GM10248 (cell line): ENCODE measurements at regions of chr5 and their contacts with region 1.

Region 1: DNA sequence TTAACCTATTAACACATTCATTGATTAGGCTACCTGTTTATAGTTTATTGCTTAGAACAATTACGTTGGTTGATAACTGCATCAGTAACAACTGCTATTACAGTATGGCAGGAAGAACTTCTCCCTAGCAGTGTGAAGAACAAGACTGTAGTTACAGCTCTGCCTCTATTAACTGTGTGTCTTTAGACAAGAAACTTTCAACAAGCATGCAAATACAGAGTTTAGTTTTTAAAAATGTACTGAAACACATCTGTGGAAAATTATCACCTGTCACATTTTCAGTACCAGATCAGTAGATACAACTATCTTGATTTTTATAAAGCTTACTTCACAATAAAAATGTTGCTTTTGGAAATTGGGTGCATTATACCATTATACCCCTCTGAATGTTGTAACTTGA is 22.2 kb downstream of the ELL2 start:
- DNase-seq: no peak
- CTCF ChIP-seq: no peak

Region 2: DNA sequence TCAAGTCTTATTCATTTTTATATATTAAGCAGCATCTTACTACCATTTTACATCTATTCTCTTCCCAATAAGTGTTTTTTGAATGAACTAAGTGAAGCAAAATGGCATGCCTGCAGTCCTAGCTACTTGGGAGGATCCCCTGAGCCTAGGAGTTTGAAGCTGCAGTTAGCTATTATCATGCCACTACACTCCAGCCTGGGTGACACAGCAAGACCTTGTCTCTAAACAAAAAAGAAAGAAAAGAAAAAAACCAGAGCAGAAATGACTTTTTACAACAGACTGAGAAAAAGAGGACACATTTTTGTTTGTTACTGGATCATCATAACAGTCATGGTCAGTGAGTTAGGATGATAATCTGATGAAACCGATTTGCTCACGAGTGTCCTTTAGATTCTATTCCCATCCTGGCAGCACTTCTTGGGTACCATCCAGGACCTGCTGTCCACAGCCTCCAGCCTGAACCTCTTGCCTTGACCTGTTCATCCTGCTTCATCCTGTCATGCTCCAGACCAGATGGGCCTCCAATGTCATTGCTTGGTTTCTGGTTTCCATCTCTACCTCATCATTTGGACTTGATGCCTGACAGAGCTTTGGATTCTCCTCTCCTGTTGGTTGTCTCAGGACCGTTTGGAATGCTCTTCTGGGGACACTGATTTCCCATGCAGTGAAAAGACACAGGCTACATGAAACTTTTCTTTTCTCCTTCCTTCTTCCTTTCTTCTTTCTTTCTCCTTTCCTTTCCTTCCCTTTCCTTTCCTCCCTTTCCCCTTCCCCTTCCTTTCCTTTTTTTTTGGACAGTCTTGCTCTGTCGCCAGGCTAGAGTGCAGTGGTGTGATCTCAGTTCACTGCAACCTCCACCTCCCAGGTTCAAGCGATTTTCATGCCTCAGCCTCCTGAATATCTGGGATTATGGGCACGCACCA is 66.9 kb before region 1 on chr5:
- CTCF ChIA-PET with region 1: no interaction called
- POLR2A ChIA-PET with region 1: no interaction called
- DNase-seq: no peak
- CTCF ChIP-seq: no peak

Region 3: GRCh38 chr5:95924720-95925377 is 14.6 kb before region 1 on chr5:
- CTCF ChIA-PET with region 1: interaction called, 14 read pairs
- POLR2A ChIA-PET with region 1: no interaction called
- DNase-seq: no peak
- CTCF ChIP-seq: no peak

Region 4: GRCh38 chr5:95949810-95950209 is 10.3 kb after region 1 on chr5:
- CTCF ChIA-PET with region 1: interaction called, 18 read pairs
- POLR2A ChIA-PET with region 1: no interaction called
- DNase-seq: peak; percentile 32
- CTCF ChIP-seq: no peak

Region 5: DNA sequence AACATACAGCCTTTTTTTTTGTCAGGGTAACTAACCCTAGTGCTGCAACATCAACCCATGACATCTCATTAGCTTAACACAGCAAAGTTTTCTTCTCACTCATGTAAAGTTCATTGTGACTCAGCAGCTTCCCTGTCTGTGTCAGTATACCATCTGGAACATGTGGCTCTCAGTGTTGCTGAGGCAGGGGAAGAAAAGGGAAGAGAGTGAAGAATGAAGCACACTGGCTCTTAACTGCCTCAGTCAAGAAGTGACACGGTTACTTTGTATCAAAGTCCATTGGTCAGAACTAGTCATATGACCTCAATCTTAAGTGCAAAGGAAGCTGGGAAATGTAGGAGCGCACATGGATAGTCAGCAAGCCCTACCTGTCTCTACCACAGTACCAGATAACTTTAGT is 207.2 kb after region 1 on chr5:
- CTCF ChIA-PET with region 1: no interaction called
- POLR2A ChIA-PET with region 1: no interaction called
- DNase-seq: peak; percentile 22
- CTCF ChIP-seq: no peak